Ascending aorta (tissue), 2 donors: ENCODE measurements at regions of chr9 and their contacts with region 1.

Region 1: DNA sequence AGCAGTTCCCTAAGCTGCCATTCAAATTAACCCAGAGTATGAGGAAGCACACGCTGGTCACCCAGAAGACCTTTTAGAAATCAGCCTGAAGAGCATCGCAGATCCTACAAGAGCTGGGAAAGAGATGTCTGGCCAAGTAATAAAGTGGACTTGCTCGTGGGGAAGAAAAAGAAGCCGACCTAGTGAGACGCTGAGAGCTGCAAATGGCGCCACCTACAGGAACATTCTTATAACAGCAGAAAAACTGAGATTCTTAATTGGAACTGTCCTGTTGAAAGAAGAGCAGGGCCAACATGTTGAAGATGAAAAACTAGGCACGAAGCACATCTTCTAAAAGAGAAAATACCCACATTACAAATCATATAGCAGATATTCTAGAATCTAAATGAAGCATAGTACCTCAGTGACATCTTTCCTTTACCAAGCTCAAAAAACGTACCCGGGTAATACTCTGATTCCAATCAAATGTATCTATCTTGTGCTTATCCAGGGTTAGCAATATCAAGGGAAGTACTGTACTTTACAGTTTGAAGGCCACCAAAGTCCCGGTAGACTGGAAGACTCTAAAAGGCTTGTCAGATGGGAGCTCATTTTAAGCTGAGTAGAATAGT is 3.9 kb upstream of the GNAQ start:
- DNase-seq: peak in 1 of 2 donors; percentile 74
- H3K4me3 ChIP-seq: peak overlapping the region in 1 of 2 donors; percentile 40
- H3K27ac ChIP-seq: peak overlapping the region; percentile 56 to 60
- H3K4me1 ChIP-seq: peaks cover 0 to 8% of the 10 kb centered on the region in 2 donors
- H3K27me3 ChIP-seq: no peaks in the 10 kb centered on the region
- CTCF ChIP-seq: peak; percentile 60 to 90 (median 81)

Region 2: DNA sequence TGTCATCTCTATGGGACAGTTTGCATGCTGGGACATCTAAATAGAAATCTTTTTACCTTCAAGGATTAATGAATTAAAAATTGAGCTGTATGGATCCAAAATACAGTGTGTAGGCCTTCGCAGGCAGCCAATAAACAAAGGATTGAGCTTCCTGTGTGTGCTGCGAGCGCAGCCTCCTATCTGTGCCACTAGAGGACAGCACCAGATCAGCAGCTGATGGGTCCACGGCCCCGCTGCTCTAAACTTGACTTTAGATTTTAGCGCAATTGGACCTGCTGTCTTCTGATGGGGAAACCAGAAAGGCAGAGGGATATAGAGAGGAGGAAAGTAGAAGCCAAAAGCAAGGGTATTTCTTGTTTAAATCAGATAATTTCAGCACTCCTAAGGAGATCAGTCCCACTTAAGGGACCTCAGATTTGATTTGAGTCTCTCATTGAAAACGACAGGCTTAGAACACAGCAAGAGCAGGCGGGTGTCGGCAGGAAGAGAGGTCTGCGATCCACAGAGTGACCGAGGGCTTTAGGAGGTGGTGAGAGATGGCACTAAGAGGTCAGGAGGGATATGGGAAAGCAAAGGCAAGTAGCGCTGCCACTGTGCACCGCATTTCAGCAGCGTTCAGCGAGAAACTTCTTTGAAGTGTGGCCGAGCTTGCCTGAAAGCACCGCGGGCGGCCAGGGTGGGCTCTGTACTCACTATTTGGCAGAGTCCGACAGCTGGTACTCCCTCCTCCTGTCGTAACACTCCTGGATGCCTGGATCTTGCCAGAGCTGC is 601.6 kb before region 1 on chr9:
- intact Hi-C with region 1: loop called (anchors 5 kb)
- DNase-seq: peak in 1 of 2 donors; percentile 76
- H3K4me3 ChIP-seq: no peak overlapping the region
- H3K27ac ChIP-seq: no peak overlapping the region
- H3K4me1 ChIP-seq: no peaks in the 10 kb centered on the region
- H3K27me3 ChIP-seq: no peaks in the 10 kb centered on the region
- CTCF ChIP-seq: peak; percentile 65 to 93 (median 93)

Region 3: DNA sequence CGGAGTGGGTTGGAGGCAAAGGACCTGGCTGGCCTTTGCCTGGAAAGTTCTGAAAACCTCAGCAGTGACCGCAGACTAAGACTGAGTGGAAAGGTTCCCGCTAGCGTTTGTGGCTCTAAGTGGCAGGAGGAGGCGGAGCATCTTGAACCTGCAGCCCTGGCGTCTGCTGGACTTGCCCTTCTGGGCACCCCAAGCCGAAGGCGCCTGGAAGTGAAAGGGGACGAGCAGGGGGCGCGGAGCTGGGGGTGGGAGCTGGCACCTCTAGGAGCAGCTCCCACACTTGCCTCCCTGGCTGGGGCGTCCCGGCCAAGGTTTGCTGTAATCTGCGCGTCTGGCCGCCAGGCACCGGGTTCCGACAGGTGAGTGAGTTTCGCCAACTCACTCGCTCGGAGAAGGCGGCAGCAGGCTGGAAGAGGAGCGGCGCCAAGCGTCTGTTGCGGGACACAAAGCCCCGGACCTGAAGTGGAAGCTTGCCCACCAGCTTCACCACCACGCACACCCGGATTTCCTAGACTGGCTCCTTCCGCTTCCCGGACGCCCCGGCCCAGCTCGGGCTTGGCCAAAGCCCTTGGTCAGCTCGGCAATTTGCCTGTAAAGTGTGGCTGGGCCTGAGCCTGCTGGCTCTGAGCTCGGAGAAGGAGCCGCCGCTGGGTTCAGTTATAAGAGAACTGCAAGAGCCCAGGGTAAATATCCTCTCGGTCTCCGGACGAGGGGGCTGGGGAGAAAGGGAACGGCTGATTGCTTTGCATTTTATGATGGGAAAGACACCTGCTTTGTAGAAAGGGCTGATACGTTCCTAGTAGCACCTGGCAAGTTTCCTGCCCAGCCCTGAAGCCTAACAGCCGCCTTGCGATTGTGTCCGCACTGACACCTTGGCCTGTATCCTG is 387.0 kb before region 1 on chr9 and contains the start of gene GNA14:
- intact Hi-C with region 1: loop called (anchors 5 kb)
- DNase-seq: peak in 1 of 2 donors; percentile 69
- H3K4me3 ChIP-seq: peak within 1 kb of the TSS; percentile 70 to 71
- H3K27ac ChIP-seq: peak within 1 kb of the TSS in 1 of 2 donors; percentile 49
- H3K4me1 ChIP-seq: peaks cover 0 to 5% of the 10 kb centered on the region in 2 donors
- H3K27me3 ChIP-seq: no peaks in the 10 kb centered on the region
- CTCF ChIP-seq: no peak
- total RNA-seq, gene GNA14: 3.5 TPM

Region 4: GRCh38 chr9:77707383-77708063 is 328.0 kb before region 1 on chr9:
- intact Hi-C with region 1: loop called (anchors 2 kb)
- DNase-seq: peak in 1 of 2 donors; percentile 93
- H3K4me3 ChIP-seq: no peak overlapping the region
- H3K27ac ChIP-seq: peak overlapping the region; percentile 54 to 69
- H3K4me1 ChIP-seq: peaks cover 0 to 13% of the 10 kb centered on the region in 2 donors
- H3K27me3 ChIP-seq: no peaks in the 10 kb centered on the region
- CTCF ChIP-seq: no peak

Region 5: GRCh38 chr9:77848897-77849296 is 186.6 kb before region 1 on chr9:
- intact Hi-C with region 1: loop called (anchors 2 kb)
- DNase-seq: peak; percentile 70 to 94
- H3K4me3 ChIP-seq: no peak overlapping the region
- H3K27ac ChIP-seq: peak overlapping the region; percentile 92 to 94
- H3K4me1 ChIP-seq: peaks cover 17 to 49% of the 10 kb centered on the region in 2 donors
- H3K27me3 ChIP-seq: no peaks in the 10 kb centered on the region
- CTCF ChIP-seq: no peak

Region 6: GRCh38 chr9:77944556-77945243 is 90.8 kb before region 1 on chr9:
- intact Hi-C with region 1: loop called (anchors 5 kb)
- DNase-seq: no peak
- H3K4me3 ChIP-seq: no peak overlapping the region
- H3K27ac ChIP-seq: peak overlapping the region; percentile 58 to 77
- H3K4me1 ChIP-seq: peaks cover 6 to 55% of the 10 kb centered on the region in 2 donors
- H3K27me3 ChIP-seq: no peaks in the 10 kb centered on the region
- CTCF ChIP-seq: no peak

Region 7: GRCh38 chr9:77960356-77961153 is 74.9 kb before region 1 on chr9:
- intact Hi-C with region 1: no loop called
- DNase-seq: no peak
- H3K4me3 ChIP-seq: peak overlapping the region in 1 of 2 donors; percentile 18
- H3K27ac ChIP-seq: peak overlapping the region; percentile 70 to 76
- H3K4me1 ChIP-seq: peaks cover 5 to 52% of the 10 kb centered on the region in 2 donors
- H3K27me3 ChIP-seq: no peaks in the 10 kb centered on the region
- CTCF ChIP-seq: no peak